ENCODE measurements at regions of chr2 and their contacts with region 1.

Region 1: DNA sequence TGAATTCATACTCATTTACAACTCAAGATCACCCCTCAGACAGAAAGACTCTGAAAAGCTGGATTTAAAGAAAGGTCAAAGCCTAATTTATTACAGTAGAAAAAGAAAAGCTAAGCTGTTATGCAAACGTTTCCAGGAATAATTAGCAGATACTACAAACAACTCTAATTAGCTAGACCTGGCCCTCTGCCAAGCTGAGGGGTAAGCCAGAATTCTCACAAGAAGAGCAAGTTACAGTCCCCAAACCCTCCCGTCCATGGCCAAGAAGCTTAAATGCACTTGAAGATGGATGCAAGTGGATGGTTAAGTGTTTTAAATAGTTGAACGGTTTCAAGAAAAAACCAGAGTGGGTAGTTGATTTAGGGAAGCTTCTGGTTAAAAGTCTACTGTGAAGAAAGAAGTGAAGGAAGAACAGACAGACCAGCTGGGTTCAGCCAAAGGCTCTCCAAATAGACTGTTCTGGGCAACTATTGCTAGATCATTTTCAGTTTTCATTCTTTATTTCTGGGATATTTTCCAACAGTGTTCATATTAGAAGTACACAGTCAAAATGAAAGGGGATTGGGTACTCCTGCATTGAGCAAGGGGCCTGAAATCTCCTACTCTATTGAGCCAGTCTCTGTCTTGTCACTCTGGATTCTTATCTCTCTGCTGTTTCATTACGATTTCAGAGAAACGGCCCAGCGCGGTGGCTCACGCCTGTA is 4.8 kb downstream of the LMAN2L start:
- DNase-seq: no peak
- H3K4me3 ChIP-seq: no peak overlapping the region
- H3K27ac ChIP-seq: peak overlapping the region in 1 of 4 donors; percentile 8
- H3K4me1 ChIP-seq: peaks cover 4 to 27% (median 16%) of the 10 kb centered on the region in 4 donors
- H3K27me3 ChIP-seq: no peaks in the 10 kb centered on the region
- CTCF ChIP-seq: no peak
- EP300 ChIP-seq: no peak
- POLR2A ChIP-seq: no peak

Region 2: GRCh38 chr2:96715658-96716057 is 19.4 kb before region 1 on chr2:
- in situ Hi-C with region 1: no loop called
- intact Hi-C with region 1: loop called (anchors 1 kb)
- DNase-seq: no peak
- H3K4me3 ChIP-seq: no peak overlapping the region
- H3K27ac ChIP-seq: peak overlapping the region in 1 of 4 donors; percentile 74
- H3K4me1 ChIP-seq: peaks cover 0 to 18% (median 3%) of the 10 kb centered on the region in 4 donors
- H3K27me3 ChIP-seq: no peaks in the 10 kb centered on the region
- CTCF ChIP-seq: no peak
- EP300 ChIP-seq: no peak
- POLR2A ChIP-seq: no peak

Measured in transverse colon (tissue), 4 donors.